HepG2 (cell line): ENCODE measurements at regions of chr14 and their contacts with region 1.

Region 1: DNA sequence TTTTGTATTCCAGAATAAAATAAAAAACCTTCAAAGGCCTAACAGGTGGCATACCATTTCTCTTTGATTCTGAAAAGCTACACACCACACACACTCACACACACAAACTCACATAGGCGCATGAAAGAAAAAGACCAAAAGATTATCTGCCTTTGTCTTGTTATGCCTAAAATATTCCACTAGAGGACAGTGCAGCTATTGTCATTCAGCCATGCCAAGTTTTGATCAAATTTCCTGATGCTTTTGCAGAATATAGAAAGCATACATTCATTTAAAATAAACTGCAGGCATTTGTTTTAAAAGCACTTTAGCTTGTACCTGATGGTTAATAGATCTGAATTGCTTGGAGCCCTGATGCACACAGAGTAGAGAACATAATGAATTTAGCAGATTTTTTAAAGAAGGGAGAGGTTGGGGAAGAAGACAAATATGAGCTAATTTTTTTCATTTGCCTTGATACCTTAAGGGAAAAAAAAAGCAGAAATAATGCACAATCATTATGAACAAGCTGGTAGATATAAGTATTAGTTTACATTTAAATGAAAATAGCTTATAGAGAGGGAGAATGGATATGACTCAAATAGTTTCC is 1766.9 kb upstream of the SEL1L start:
- DNase-seq: peak; percentile 12
- ATAC-seq: no peak
- H3K4me3 ChIP-seq: no peak overlapping the region
- H3K27ac ChIP-seq: no peak overlapping the region
- H3K4me1 ChIP-seq: no peaks in the 10 kb centered on the region
- H3K27me3 ChIP-seq: no peaks in the 10 kb centered on the region
- CTCF ChIP-seq: peak; percentile 72
- EP300 ChIP-seq: no peak
- POLR2A ChIP-seq: no peak
- RAD21 ChIP-seq: peak; percentile 52; the same call in 1 of the 2 replicates

Region 2: DNA sequence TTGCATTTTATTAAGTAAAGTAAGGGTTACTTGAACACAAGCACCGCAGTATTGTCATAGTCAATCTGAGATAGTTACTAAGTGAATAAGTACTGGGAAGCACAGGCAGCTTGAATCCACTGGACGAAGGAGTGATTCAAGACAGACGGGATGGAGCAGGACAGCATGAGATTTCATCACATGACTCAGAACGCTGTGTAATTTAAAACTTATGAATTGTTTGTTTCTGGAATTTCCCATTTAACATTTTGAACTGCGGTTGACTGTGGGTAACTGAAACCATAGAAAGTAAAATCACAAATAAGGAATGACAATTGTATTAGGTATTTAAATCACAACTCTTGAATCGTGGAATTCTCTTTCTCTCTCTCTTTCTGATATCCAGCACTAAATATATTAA is 136.6 kb before region 1 on chr14:
- CTCF ChIA-PET with region 1: no interaction called
- POLR2A ChIA-PET with region 1: no interaction called
- in situ Hi-C with region 1: no loop called
- intact Hi-C with region 1: no loop called
- DNase-seq: no peak
- ATAC-seq: no peak
- H3K4me3 ChIP-seq: no peak overlapping the region
- H3K27ac ChIP-seq: no peak overlapping the region
- H3K4me1 ChIP-seq: no peaks in the 10 kb centered on the region
- H3K27me3 ChIP-seq: no peaks in the 10 kb centered on the region; a peak in 1 of 5 replicates
- CTCF ChIP-seq: no peak
- EP300 ChIP-seq: no peak
- POLR2A ChIP-seq: no peak
- RAD21 ChIP-seq: no peak

Region 3: GRCh38 chr14:83347874-83348273 is 47.3 kb after region 1 on chr14:
- CTCF ChIA-PET with region 1: no interaction called
- POLR2A ChIA-PET with region 1: no interaction called
- in situ Hi-C with region 1: no loop called
- intact Hi-C with region 1: no loop called
- DNase-seq: no peak
- ATAC-seq: no peak
- H3K4me3 ChIP-seq: no peak overlapping the region
- H3K27ac ChIP-seq: no peak overlapping the region
- H3K4me1 ChIP-seq: no peaks in the 10 kb centered on the region
- H3K27me3 ChIP-seq: no peaks in the 10 kb centered on the region
- CTCF ChIP-seq: no peak
- EP300 ChIP-seq: no peak
- POLR2A ChIP-seq: no peak
- RAD21 ChIP-seq: no peak

Region 4: DNA sequence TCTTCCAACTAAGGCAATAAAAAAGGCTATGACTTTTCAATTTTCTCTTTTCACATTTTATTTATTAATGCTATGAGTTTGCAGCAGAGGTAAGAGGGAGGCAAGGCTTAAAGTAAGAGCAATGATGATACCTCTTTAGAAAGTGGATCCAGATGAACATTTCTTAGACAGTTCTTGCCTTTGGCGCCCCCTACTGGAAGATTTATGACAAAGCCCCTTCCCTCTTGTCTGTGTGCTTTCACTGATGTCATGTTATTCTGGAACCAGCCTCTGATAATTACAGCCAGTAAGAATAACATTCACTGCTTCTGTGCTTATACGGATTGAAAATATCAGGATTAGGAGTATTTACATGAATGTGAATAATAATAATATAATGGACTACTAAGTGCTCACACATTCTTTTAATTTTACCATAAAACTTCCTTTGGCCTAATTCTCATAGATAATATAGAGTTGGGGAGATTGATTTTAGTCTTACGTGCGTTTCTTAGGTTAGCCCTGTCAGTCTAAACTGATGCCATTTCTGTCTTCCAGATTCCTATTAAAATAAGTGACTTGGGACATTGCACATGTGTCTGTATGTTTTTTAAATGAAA is 163.0 kb after region 1 on chr14:
- CTCF ChIA-PET with region 1: no interaction called
- POLR2A ChIA-PET with region 1: no interaction called
- in situ Hi-C with region 1: no loop called
- intact Hi-C with region 1: loop called (anchors 2 kb)
- DNase-seq: peak; percentile 12
- ATAC-seq: no peak; the same call in 2 of the 3 replicates
- H3K4me3 ChIP-seq: no peak overlapping the region
- H3K27ac ChIP-seq: no peak overlapping the region
- H3K4me1 ChIP-seq: no peaks in the 10 kb centered on the region
- H3K27me3 ChIP-seq: no peaks in the 10 kb centered on the region
- CTCF ChIP-seq: peak; percentile 40
- EP300 ChIP-seq: no peak
- POLR2A ChIP-seq: no peak
- RAD21 ChIP-seq: no peak